Activated B cell treated with CpG ODN at 0.5 μM for 24 hours (primary cell): ENCODE measurements at regions of chr4 and their contacts with region 1.

Region 1: GRCh38 chr4:143335979-143336780 is 496 bp upstream of the GAB1 start:
- DNase-seq: peak; percentile 67
- ATAC-seq: peak; percentile 57
- H3K4me3 Mint-ChIP-seq: peak overlapping the region; percentile 95
- H3K27ac Mint-ChIP-seq: peak overlapping the region; percentile 56
- H3K4me1 Mint-ChIP-seq: peaks cover 14% of the 10 kb centered on the region
- H3K27me3 Mint-ChIP-seq: peaks cover 15% of the 10 kb centered on the region
- CTCF ChIP-seq: no peak

Region 2: GRCh38 chr4:141636082-141636770 is 1700.0 kb before region 1 on chr4 and contains the start of gene IL15:
- CTCF ChIA-PET with region 1: no interaction called
- POLR2A ChIA-PET with region 1: no interaction called
- intact Hi-C with region 1: loop called (anchors 10 kb)
- DNase-seq: peak; percentile 35
- ATAC-seq: peak; percentile 73
- H3K4me3 Mint-ChIP-seq: peak within 1 kb of the TSS; percentile 94
- H3K27ac Mint-ChIP-seq: peak within 1 kb of the TSS; percentile 84
- H3K4me1 Mint-ChIP-seq: peaks cover 39% of the 10 kb centered on the region
- H3K27me3 Mint-ChIP-seq: no peaks in the 10 kb centered on the region
- CTCF ChIP-seq: no peak
- total RNA-seq, gene IL15: 3.4 and 3.5 TPM in 2 replicates

Region 3: GRCh38 chr4:142984871-142985585 is 351.2 kb before region 1 on chr4:
- CTCF ChIA-PET with region 1: no interaction called
- POLR2A ChIA-PET with region 1: no interaction called
- intact Hi-C with region 1: no loop called
- DNase-seq: no peak
- ATAC-seq: no peak
- H3K4me3 Mint-ChIP-seq: no peak overlapping the region
- H3K27ac Mint-ChIP-seq: no peak overlapping the region
- H3K4me1 Mint-ChIP-seq: no peaks in the 10 kb centered on the region
- H3K27me3 Mint-ChIP-seq: no peaks in the 10 kb centered on the region
- CTCF ChIP-seq: no peak

Region 4: DNA sequence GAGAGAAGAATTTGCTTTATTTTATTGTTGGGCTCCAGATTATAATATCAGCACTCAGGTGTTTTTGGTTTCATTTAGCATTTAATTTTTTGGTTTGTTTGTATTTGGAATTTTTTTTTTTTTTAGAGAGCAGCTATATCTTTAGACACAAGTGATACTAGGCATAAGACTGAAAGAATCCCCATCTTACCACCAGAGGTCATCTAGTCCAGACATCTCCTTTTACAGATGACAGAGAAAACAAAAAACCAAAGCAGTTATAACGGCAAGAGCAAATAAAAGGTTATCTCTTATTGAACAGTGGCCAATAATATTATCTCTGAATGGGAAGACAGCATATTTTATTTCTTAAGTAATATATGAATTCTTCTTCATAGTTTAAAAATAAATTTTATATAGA is 128.6 kb before region 1 on chr4:
- CTCF ChIA-PET with region 1: no interaction called
- POLR2A ChIA-PET with region 1: no interaction called
- intact Hi-C with region 1: no loop called
- DNase-seq: no peak
- ATAC-seq: no peak
- H3K4me3 Mint-ChIP-seq: no peak overlapping the region
- H3K27ac Mint-ChIP-seq: no peak overlapping the region
- H3K4me1 Mint-ChIP-seq: no peaks in the 10 kb centered on the region
- H3K27me3 Mint-ChIP-seq: no peaks in the 10 kb centered on the region
- CTCF ChIP-seq: no peak

Region 5: GRCh38 chr4:143358923-143359643 is 22.9 kb after region 1 on chr4:
- CTCF ChIA-PET with region 1: interaction called, 4 read pairs
- POLR2A ChIA-PET with region 1: interaction called, 31 read pairs
- intact Hi-C with region 1: loop called (anchors 1 kb)
- DNase-seq: no peak
- ATAC-seq: peak; percentile 88
- H3K4me3 Mint-ChIP-seq: peak overlapping the region; percentile 65
- H3K27ac Mint-ChIP-seq: peak overlapping the region; percentile 83
- H3K4me1 Mint-ChIP-seq: peaks cover 66% of the 10 kb centered on the region
- H3K27me3 Mint-ChIP-seq: no peaks in the 10 kb centered on the region
- CTCF ChIP-seq: no peak

Region 6: DNA sequence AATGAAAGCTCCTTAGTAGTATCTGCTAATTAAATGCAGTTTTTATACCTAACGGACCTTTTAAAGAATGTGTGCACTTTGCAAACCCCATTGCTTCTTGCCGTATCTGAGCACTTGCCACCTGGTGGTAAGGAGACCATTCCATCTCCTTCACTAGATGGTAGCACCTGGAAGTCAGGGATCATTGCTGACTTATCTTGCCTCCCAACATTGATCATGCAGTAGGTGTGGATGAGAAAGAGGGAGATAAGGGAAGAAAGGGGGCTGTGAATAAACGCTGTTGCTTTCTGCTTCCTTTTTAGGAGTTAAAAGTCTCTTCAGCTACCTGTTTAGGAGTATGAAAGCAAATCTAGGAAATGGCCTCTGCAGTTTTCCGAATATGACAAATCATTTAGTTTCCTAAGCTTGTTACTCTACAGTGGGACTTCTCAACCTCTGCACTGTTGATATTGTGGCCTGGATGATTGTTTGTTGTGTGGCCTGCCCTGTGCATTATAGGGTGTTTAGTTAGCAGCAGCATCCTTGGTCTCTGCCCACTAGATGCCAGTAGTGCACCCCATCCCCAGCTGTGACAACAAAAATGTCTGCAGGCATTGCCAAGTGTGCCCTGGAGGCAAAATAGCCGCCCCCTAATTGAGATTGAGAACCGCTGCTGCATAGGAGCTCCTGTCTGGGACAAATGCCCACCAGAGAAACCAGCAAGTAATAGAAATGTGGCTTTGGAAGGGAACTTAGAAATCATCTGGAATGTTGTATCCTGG is 39.3 kb after region 1 on chr4:
- CTCF ChIA-PET with region 1: interaction called, 15 read pairs
- POLR2A ChIA-PET with region 1: interaction called, 27 read pairs
- intact Hi-C with region 1: loop called (anchors 1 kb)
- DNase-seq: no peak
- ATAC-seq: peak; percentile 61
- H3K4me3 Mint-ChIP-seq: no peak overlapping the region
- H3K27ac Mint-ChIP-seq: peak overlapping the region; percentile 86
- H3K4me1 Mint-ChIP-seq: peaks cover 68% of the 10 kb centered on the region
- H3K27me3 Mint-ChIP-seq: no peaks in the 10 kb centered on the region
- CTCF ChIP-seq: no peak

Region 7: GRCh38 chr4:143399113-143399949 is 63.2 kb after region 1 on chr4:
- CTCF ChIA-PET with region 1: no interaction called
- POLR2A ChIA-PET with region 1: interaction called, 6 read pairs
- intact Hi-C with region 1: loop called (anchors 2 kb)
- DNase-seq: no peak
- ATAC-seq: peak; percentile 56
- H3K4me3 Mint-ChIP-seq: no peak overlapping the region
- H3K27ac Mint-ChIP-seq: no peak overlapping the region
- H3K4me1 Mint-ChIP-seq: peaks cover 30% of the 10 kb centered on the region
- H3K27me3 Mint-ChIP-seq: no peaks in the 10 kb centered on the region
- CTCF ChIP-seq: no peak

Region 8: GRCh38 chr4:143417679-143418403 is 81.7 kb after region 1 on chr4:
- CTCF ChIA-PET with region 1: no interaction called
- POLR2A ChIA-PET with region 1: interaction called, 16 read pairs
- intact Hi-C with region 1: no loop called
- DNase-seq: peak; percentile 35
- ATAC-seq: peak; percentile 96
- H3K4me3 Mint-ChIP-seq: peak overlapping the region; percentile 76
- H3K27ac Mint-ChIP-seq: peak overlapping the region; percentile 92
- H3K4me1 Mint-ChIP-seq: peaks cover 36% of the 10 kb centered on the region
- H3K27me3 Mint-ChIP-seq: no peaks in the 10 kb centered on the region
- CTCF ChIP-seq: no peak